ENCODE measurements at regions of chr3 and their contacts with region 1.

Region 1: DNA sequence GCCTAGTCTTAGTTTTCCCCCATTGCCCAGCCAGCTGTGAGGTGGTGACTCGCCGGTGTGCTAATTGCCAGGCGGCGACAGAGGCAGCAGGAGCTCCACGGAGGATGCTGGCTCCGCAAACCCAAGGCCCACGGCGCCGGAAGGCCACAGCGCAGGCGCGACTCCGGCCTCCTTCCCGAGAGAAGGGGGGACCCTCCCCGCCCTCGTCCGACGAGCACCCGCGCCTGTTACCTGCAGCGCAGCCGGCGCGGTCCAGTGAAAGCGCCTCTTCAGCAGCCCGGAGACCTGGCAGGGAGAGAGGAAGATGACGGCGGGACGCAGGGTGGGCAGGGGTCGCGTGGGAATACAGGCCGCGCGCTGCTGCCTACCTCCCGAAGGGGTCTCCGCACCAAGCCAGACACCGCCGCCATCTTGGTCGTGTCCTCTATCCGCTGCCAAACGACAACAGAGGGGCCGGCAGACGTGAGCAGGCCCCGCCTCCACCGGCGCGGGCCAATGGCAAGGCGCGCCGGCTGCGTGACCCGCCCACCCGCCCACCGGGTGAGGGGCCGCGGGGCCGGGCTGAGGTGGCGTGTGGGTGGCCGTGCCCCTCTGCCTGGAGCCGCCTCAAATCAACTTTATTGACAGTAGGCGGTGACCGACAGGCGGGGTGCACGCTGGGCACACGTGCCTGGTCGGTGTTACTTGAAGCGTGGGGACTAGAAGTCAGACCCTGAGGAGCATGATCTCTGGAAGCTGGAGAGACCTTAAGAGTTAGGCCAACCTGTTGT is at the start of gene PDHB:
- DNase-seq: peak; percentile 78 to 91 (median 90)
- ATAC-seq: peak; percentile 98
- H3K4me3 ChIP-seq: peak within 1 kb of the TSS; percentile 92
- H3K4me3 Mint-ChIP-seq: peak within 1 kb of the TSS; percentile 90 to 98 (median 95)
- H3K27ac ChIP-seq: peak within 1 kb of the TSS; percentile 81
- H3K27ac Mint-ChIP-seq: peak within 1 kb of the TSS; percentile 94 to 98 (median 97)
- H3K4me1 ChIP-seq: peaks cover 14 to 15% of the 10 kb centered on the region in 2 donors
- H3K4me1 Mint-ChIP-seq: peaks cover 15 to 34% (median 27%) of the 10 kb centered on the region in 7 donors
- H3K27me3 ChIP-seq: no peaks in the 10 kb centered on the region
- H3K27me3 Mint-ChIP-seq: peaks cover 0 to 9% (median 0%) of the 10 kb centered on the region in 5 donors
- total RNA-seq, gene PDHB: 30.1 to 58.1 (median 54.0) TPM

Region 2: GRCh38 chr3:56682462-56683121 is 1751.0 kb before region 1 on chr3:
- CTCF ChIA-PET with region 1: no interaction called
- POLR2A ChIA-PET with region 1: no interaction called
- intact Hi-C with region 1: loop called in 1 of 2 experiments (anchors 2 kb)
- DNase-seq: peak; percentile 70 to 84 (median 79)
- ATAC-seq: peak; percentile 81
- H3K4me3 ChIP-seq: peak overlapping the region; percentile 93
- H3K4me3 Mint-ChIP-seq: peak overlapping the region; percentile 88 to 100 (median 94)
- H3K27ac ChIP-seq: peak overlapping the region; percentile 92
- H3K27ac Mint-ChIP-seq: peak overlapping the region; percentile 90 to 100 (median 94)
- H3K4me1 ChIP-seq: peaks cover 33 to 34% of the 10 kb centered on the region in 2 donors
- H3K4me1 Mint-ChIP-seq: peaks cover 28 to 55% (median 48%) of the 10 kb centered on the region in 7 donors
- H3K27me3 ChIP-seq: no peaks in the 10 kb centered on the region
- H3K27me3 Mint-ChIP-seq: no peaks in the 10 kb centered on the region

Region 3: GRCh38 chr3:57755668-57756527 is 677.7 kb before region 1 on chr3 and contains the start of gene SLMAP:
- CTCF ChIA-PET with region 1: no interaction called
- POLR2A ChIA-PET with region 1: no interaction called
- intact Hi-C with region 1: loop called in 1 of 2 experiments (anchors 1 kb)
- DNase-seq: peak; percentile 84 to 97 (median 95)
- ATAC-seq: peak; percentile 98
- H3K4me3 ChIP-seq: peak within 1 kb of the TSS; percentile 80
- H3K4me3 Mint-ChIP-seq: peak within 1 kb of the TSS; percentile 92 to 98 (median 97)
- H3K27ac ChIP-seq: peak within 1 kb of the TSS; percentile 84
- H3K27ac Mint-ChIP-seq: peak within 1 kb of the TSS; percentile 88 to 96 (median 92)
- H3K4me1 ChIP-seq: peaks cover 23 to 29% of the 10 kb centered on the region in 2 donors
- H3K4me1 Mint-ChIP-seq: peaks cover 17 to 45% (median 41%) of the 10 kb centered on the region in 7 donors
- H3K27me3 ChIP-seq: no peaks in the 10 kb centered on the region
- H3K27me3 Mint-ChIP-seq: peaks cover 0 to 8% (median 0%) of the 10 kb centered on the region in 5 donors
- total RNA-seq, gene SLMAP: 54.6 to 77.1 (median 66.6) TPM

Region 4: DNA sequence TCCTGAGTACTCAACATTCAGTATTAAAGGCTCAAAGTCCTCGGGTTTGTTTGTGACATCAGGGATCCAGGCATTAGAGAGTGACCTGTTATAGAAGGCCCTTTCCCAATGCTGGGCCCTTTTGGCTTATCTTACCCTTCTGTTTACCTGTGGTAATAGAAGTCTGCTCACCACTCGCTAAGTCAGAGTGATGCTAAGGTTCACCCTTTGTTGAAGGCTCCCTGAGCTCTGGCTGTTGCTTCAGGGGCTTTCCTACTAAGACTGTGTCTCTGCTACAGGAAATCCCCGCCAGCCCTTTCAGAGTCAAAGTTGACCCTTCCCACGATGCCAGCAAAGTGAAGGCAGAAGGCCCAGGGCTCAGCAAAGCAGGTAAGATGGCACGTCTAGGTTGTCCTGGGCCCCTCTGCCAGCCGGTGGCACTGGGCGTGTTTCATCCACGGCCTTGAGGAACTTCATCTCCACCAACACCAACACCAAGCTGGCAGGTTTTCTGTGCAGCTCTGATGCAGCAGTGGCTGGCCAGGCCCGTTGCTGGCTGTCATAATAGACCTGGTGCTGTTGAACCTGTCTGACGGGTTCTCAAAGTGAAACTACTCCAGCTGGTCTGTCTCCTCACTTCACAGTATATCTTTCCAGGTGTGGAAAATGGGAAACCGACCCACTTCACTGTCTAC is 321.9 kb before region 1 on chr3:
- CTCF ChIA-PET with region 1: no interaction called
- POLR2A ChIA-PET with region 1: no interaction called
- intact Hi-C with region 1: no loop called
- DNase-seq: no peak
- ATAC-seq: no peak
- H3K4me3 ChIP-seq: no peak overlapping the region
- H3K4me3 Mint-ChIP-seq: no peak overlapping the region
- H3K27ac ChIP-seq: no peak overlapping the region
- H3K27ac Mint-ChIP-seq: peak overlapping the region in 5 of 9 donors; percentile 16 to 59 (median 48)
- H3K4me1 ChIP-seq: peaks cover 19 to 23% of the 10 kb centered on the region in 2 donors
- H3K4me1 Mint-ChIP-seq: peaks cover 9 to 28% (median 24%) of the 10 kb centered on the region in 7 donors
- H3K27me3 ChIP-seq: no peaks in the 10 kb centered on the region
- H3K27me3 Mint-ChIP-seq: no peaks in the 10 kb centered on the region

Region 5: DNA sequence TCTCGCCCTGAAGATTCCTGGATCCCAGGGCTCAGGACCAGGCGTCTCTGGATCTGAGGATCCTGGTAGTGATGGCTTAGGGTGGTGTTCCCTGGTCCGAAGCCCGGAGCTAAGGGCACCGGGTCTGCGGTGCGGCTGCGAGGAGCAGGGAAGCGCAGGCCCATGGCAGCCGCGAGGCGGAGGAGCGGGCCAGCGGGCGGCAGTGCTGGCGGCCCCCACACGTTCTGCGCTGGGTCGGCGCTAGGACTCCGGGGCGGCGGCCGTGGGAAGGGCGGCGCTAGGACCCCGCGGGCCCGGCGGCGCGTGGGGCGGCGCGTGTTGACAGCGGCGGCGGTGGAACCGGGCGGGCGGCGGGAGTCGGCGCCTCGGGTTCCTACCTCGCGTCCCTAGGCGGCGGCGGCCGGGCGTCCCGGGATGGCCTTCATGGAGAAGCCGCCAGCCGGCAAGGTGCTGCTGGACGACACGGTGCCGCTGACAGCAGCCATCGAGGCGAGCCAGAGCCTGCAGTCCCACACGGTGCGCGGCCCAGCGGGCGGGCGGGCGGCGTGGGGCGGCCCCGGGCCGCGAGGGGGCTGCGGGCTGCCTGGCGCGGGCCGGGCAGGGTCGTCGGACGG is 100.9 kb before region 1 on chr3 and contains the start of gene PXK:
- CTCF ChIA-PET with region 1: no interaction called
- POLR2A ChIA-PET with region 1: interaction called, 3 read pairs
- intact Hi-C with region 1: loop called (anchors 1 kb)
- DNase-seq: peak; percentile 63 to 89 (median 79)
- ATAC-seq: peak; percentile 94
- H3K4me3 ChIP-seq: peak within 1 kb of the TSS; percentile 68
- H3K4me3 Mint-ChIP-seq: peak within 1 kb of the TSS; percentile 83 to 100 (median 99)
- H3K27ac ChIP-seq: peak within 1 kb of the TSS; percentile 70
- H3K27ac Mint-ChIP-seq: peak within 1 kb of the TSS; percentile 65 to 97 (median 88)
- H3K4me1 ChIP-seq: peaks cover 20 to 22% of the 10 kb centered on the region in 2 donors
- H3K4me1 Mint-ChIP-seq: peaks cover 30 to 47% (median 38%) of the 10 kb centered on the region in 7 donors
- H3K27me3 ChIP-seq: no peaks in the 10 kb centered on the region
- H3K27me3 Mint-ChIP-seq: no peaks in the 10 kb centered on the region
- total RNA-seq, gene PXK: 17.3 to 38.9 (median 22.3) TPM

Region 6: GRCh38 chr3:58463181-58463941 is 29.8 kb after region 1 on chr3:
- CTCF ChIA-PET with region 1: interaction called, 4 read pairs
- POLR2A ChIA-PET with region 1: no interaction called
- intact Hi-C with region 1: loop called in 1 of 2 experiments (anchors 2 kb)
- DNase-seq: peak; percentile 16 to 76 (median 40)
- ATAC-seq: peak; percentile 98
- H3K4me3 ChIP-seq: peak overlapping the region; percentile 20
- H3K4me3 Mint-ChIP-seq: peak overlapping the region in 7 of 10 donors; percentile 34 to 65 (median 51)
- H3K27ac ChIP-seq: no peak overlapping the region
- H3K27ac Mint-ChIP-seq: no peak overlapping the region
- H3K4me1 ChIP-seq: peaks cover 4 to 7% of the 10 kb centered on the region in 2 donors
- H3K4me1 Mint-ChIP-seq: peaks cover 0 to 12% (median 6%) of the 10 kb centered on the region in 7 donors
- H3K27me3 ChIP-seq: no peaks in the 10 kb centered on the region
- H3K27me3 Mint-ChIP-seq: peaks cover 0 to 7% (median 0%) of the 10 kb centered on the region in 5 donors

Region 7: DNA sequence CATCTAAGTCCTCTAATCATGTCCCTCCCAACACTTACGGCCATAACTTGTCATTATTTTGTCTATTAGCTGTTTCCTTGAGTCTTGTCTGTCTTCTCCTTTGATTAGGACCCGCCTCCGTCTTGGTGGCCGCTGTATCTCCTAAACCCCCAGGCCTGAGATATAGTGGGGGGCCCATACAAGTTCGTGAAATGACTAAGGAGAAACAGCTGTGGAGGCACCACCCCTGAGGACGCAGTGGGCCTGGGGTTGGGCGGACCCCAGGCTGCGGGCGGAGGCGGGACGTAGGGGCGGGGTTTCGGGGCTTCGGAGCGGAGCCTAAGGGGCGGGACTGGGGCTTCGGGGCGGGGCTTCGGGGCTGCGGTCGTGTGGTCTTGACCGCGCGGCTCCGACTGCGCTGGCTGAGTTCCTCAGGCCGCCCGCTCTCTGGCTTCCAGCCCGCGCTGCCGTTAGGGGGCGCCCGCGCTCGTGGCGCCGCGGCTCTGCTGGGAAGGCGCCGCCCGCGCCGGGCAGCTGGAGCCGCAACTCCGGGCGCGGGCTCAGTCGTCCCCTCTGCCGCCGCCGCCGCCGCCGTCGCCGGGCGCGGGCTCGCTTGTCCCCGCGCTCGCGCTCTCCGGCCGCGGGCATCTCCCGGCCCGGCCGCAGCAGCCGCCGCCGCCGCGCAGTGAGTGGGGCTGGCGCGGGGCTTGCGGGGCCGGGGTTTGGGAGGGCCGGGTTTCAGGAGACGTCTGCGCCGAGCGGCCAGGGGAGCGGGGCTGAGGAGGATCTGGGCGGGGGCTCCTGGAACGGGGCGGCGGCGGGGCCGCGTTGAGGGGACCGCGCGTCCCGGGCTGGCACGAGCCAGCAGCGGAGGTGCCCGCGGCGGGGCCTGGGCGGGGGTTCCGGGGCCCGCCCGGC is 58.2 kb after region 1 on chr3 and contains the start of gene KCTD6:
- CTCF ChIA-PET with region 1: no interaction called
- POLR2A ChIA-PET with region 1: interaction called, 10 read pairs
- intact Hi-C with region 1: loop called (anchors 1 kb)
- DNase-seq: peak; percentile 72 to 95 (median 84)
- ATAC-seq: peak; percentile 93
- H3K4me3 ChIP-seq: peak within 1 kb of the TSS; percentile 95
- H3K4me3 Mint-ChIP-seq: peak within 1 kb of the TSS; percentile 92 to 99 (median 94)
- H3K27ac ChIP-seq: peak within 1 kb of the TSS; percentile 69
- H3K27ac Mint-ChIP-seq: peak within 1 kb of the TSS; percentile 83 to 97 (median 90)
- H3K4me1 ChIP-seq: peaks cover 22 to 25% of the 10 kb centered on the region in 2 donors
- H3K4me1 Mint-ChIP-seq: peaks cover 37 to 64% (median 59%) of the 10 kb centered on the region in 7 donors
- H3K27me3 ChIP-seq: no peaks in the 10 kb centered on the region
- H3K27me3 Mint-ChIP-seq: peaks cover 0 to 45% (median 0%) of the 10 kb centered on the region in 5 donors
- total RNA-seq, gene KCTD6: 4.8 to 14.2 (median 10.9) TPM

Region 8: GRCh38 chr3:58630076-58630709 is 196.6 kb after region 1 on chr3:
- CTCF ChIA-PET with region 1: no interaction called
- POLR2A ChIA-PET with region 1: no interaction called
- intact Hi-C with region 1: loop called in 1 of 2 experiments (anchors 1 kb)
- DNase-seq: peak; percentile 14 to 62 (median 33)
- ATAC-seq: peak; percentile 69
- H3K4me3 ChIP-seq: no peak overlapping the region
- H3K4me3 Mint-ChIP-seq: no peak overlapping the region
- H3K27ac ChIP-seq: no peak overlapping the region
- H3K27ac Mint-ChIP-seq: peak overlapping the region in 1 of 9 donors; percentile 42
- H3K4me1 ChIP-seq: no peaks in the 10 kb centered on the region
- H3K4me1 Mint-ChIP-seq: peaks cover 0 to 2% (median 0%) of the 10 kb centered on the region in 7 donors
- H3K27me3 ChIP-seq: no peaks in the 10 kb centered on the region
- H3K27me3 Mint-ChIP-seq: peaks cover 0 to 25% (median 11%) of the 10 kb centered on the region in 5 donors

Measured in naive thymus-derived CD4-positive, alpha-beta T cell (primary cell).